ENCODE measurements at regions of chr10 and their contacts with region 1.

Region 1: GRCh38 chr10:102432162-102432950 is at the start of gene CUEDC2:
- H3K4me3 ChIP-seq: peak within 1 kb of the TSS; percentile 62
- H3K27ac ChIP-seq: peak within 1 kb of the TSS; percentile 89
- H3K4me1 ChIP-seq: peaks cover 3% of the 10 kb centered on the region; the same call in 1 of the 2 replicates
- CTCF ChIP-seq: peak; percentile 71

Region 2: GRCh38 chr10:102444851-102445250 is 12.5 kb after region 1 on chr10:
- CTCF ChIA-PET with region 1: no interaction called
- POLR2A ChIA-PET with region 1: interaction called, 60 read pairs
- H3K4me3 ChIP-seq: no peak overlapping the region
- H3K27ac ChIP-seq: no peak overlapping the region
- H3K4me1 ChIP-seq: no peaks in the 10 kb centered on the region; the same call in 1 of the 2 replicates
- CTCF ChIP-seq: no peak

Region 3: GRCh38 chr10:102450194-102450938 is 18.0 kb after region 1 on chr10:
- CTCF ChIA-PET with region 1: no interaction called
- POLR2A ChIA-PET with region 1: interaction called, 60 read pairs
- H3K4me3 ChIP-seq: peak overlapping the region; percentile 73
- H3K27ac ChIP-seq: peak overlapping the region; percentile 97
- H3K4me1 ChIP-seq: peaks cover 5% of the 10 kb centered on the region
- CTCF ChIP-seq: peak; percentile 51; the same call in 1 of the 2 replicates

Region 4: DNA sequence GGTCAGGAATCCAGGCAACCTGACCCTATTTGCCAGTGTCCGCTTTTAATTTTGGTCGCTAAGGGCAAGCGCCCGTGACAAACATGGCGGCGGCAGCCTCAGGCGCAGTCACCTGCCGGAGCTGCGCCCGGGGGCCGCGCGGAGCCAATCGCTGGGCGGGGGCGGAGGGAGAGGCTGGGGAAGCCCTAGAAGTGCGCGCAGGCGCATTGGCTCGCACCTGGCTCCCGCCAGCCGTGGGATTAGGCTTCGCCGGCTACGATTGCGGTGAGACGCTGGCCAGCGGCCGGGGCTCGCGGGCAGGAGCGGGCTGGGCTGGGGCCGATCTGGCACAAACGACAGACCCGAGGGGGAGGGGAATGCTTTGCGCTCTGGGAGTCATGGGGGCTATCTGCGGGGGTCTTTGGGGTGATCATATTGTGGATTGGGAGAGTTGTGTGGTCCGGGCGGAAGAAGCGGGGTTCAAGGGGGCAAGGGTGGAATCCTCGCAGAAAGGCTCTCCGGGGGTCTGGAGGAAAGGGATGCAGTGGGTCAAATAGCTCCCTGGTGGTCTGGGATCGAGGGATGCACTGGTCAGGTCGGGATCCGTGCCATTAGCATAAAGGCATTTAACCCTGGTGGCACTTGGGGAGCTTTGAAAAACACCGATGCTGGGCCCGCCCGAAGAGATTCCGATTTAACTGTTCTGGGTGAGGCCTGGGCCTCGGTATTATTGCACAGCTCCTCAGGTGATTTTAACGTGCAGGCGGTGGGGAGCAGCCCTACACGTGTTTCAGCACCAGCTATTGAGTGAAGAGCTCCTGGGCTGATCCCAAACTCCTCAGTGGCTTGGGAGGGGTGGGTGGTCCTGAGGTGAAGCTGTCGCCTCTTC is 29.1 kb after region 1 on chr10:
- CTCF ChIA-PET with region 1: interaction called, 4 read pairs
- POLR2A ChIA-PET with region 1: interaction called, 13 read pairs
- H3K4me3 ChIP-seq: peak overlapping the region; percentile 21
- H3K27ac ChIP-seq: no peak overlapping the region; the same call in 1 of the 2 replicates
- H3K4me1 ChIP-seq: 0 out of 2 replicates have a peak, but pooled peaks cover 2% of the 10 kb centered on the region
- CTCF ChIP-seq: no peak